ENCODE measurements at regions of chrX and their contacts with region 1.

Region 1: GRCh38 chrX:80578517-80579105 is 158.4 kb downstream of the TENT5D start:
- ATAC-seq: peak in 3 of 8 experiments; percentile 48 to 56 (median 48)
- H3K4me3 ChIP-seq: no peak overlapping the region
- H3K27ac ChIP-seq: no peak overlapping the region
- H3K4me1 ChIP-seq: no peaks in the 10 kb centered on the region

Region 2: GRCh38 chrX:80430826-80431504 is 147.6 kb before region 1 on chrX:
- in situ Hi-C with region 1: loop called in 1 of 9 experiments (anchors 25 kb)
- ATAC-seq: no peak
- H3K4me3 ChIP-seq: no peak overlapping the region
- H3K27ac ChIP-seq: no peak overlapping the region
- H3K4me1 ChIP-seq: no peaks in the 10 kb centered on the region

Measured in motor neuron (in vitro differentiated cells).